Activated CD4-positive, alpha-beta T cell treated with anti-CD3 and anti-CD28 coated beads for 36 hours (primary cell): ENCODE measurements at regions of chr10 and their contacts with region 1.

Region 1: DNA sequence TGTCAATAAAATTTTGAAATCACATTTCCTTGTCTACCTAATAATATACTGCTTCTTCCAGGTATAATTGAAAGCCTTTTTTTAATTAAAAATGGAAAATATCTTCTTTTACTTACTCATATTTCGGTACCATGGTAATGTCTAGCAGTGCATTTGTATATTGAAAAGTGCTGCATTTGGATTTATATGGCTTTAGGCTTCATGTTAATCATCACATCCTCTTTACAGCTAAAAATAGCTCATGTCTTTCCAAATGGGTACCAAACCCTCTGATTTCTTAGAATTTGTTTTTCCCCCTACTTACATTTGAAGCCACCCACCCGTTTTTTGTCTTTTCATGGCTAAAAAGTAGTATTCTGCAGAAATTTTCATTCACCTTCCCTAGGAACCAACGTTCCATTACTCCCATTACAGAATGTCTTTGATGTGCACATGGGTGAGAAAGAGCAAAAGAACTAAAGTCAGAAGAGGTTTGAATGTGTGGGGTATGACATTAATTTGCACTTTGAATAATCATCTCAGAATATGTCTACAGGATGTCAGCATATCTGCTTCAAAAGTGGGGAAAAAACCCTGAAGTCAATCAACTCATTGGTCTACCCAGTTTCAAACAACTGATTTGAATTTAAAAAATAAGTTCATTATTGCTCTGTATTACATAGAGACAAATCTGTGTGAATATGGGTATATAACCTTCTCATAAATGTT is 935.9 kb downstream of the GATA3 start:
- DNase-seq: no peak
- ATAC-seq: peak; percentile 82
- H3K4me3 Mint-ChIP-seq: peak overlapping the region; percentile 5
- H3K27ac Mint-ChIP-seq: peak overlapping the region; percentile 62
- H3K4me1 Mint-ChIP-seq: peaks cover 63% of the 10 kb centered on the region
- H3K27me3 Mint-ChIP-seq: peaks cover 5% of the 10 kb centered on the region

Region 2: DNA sequence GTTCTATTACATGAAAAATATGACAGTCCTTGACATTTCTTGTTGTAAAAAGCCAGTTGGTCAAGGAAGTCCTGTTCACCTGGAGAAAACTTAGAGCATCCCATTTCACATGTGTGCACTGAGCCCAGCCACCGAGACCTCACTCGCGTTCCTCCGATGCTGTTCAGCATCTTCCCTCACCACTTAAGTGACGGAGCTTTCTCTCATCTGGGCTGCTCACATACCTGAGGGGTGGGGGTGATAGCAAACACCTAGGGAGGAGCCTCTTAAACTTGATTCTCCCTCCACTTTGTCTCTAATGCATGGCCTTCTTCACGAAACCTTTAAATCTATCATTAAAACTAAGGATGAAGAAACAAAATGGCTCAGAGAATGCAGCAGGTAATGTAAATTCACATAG is 14.3 kb after region 1 on chr10:
- CTCF ChIA-PET with region 1: interaction called, 3 read pairs
- POLR2A ChIA-PET with region 1: no interaction called
- intact Hi-C with region 1: loop called in 1 of 2 experiments (anchors 1 kb)
- DNase-seq: no peak
- ATAC-seq: no peak
- H3K4me3 Mint-ChIP-seq: peak overlapping the region; percentile 6
- H3K27ac Mint-ChIP-seq: peak overlapping the region; percentile 58
- H3K4me1 Mint-ChIP-seq: peaks cover 50% of the 10 kb centered on the region
- H3K27me3 Mint-ChIP-seq: no peaks in the 10 kb centered on the region

Region 3: DNA sequence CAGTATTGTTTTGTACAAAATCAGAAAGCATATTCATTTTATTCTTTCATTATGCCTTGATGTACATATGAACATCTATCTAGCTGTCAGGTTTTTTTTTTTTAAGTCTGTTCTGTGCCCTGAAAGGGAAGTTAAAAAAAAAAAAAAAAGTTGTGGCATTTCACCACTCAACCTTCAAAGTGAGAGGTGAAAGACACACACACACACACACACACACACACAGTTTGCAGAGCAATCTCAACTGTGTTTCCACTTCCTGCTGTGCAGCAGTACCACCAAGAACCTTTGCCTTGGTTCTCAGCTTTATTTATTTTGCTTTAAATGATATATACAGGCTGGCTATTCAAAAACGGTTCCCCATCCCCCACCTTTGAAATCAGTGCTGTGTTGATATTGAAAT is 19.7 kb after region 1 on chr10:
- CTCF ChIA-PET with region 1: interaction called, 3 read pairs
- POLR2A ChIA-PET with region 1: no interaction called
- intact Hi-C with region 1: loop called (anchors 1 kb)
- DNase-seq: peak; percentile 42
- ATAC-seq: peak; percentile 80
- H3K4me3 Mint-ChIP-seq: peak overlapping the region; percentile 30
- H3K27ac Mint-ChIP-seq: peak overlapping the region; percentile 78
- H3K4me1 Mint-ChIP-seq: peaks cover 64% of the 10 kb centered on the region
- H3K27me3 Mint-ChIP-seq: peaks cover 2% of the 10 kb centered on the region